Activated B cell treated with CpG ODN at 0.5 μM for 24 hours (primary cell): ENCODE measurements at regions of chr20 and their contacts with region 1.

Region 1: GRCh38 chr20:2470423-2471193 is at the start of gene SNRPB:
- DNase-seq: peak; percentile 95
- ATAC-seq: peak; percentile 94
- H3K4me3 Mint-ChIP-seq: peak within 1 kb of the TSS; percentile 99
- H3K27ac Mint-ChIP-seq: peak within 1 kb of the TSS; percentile 97
- H3K4me1 Mint-ChIP-seq: peaks cover 50% of the 10 kb centered on the region
- H3K27me3 Mint-ChIP-seq: no peaks in the 10 kb centered on the region
- CTCF ChIP-seq: no peak
- total RNA-seq, gene SNRPB: 215 and 234 TPM in 2 replicates

Region 2: DNA sequence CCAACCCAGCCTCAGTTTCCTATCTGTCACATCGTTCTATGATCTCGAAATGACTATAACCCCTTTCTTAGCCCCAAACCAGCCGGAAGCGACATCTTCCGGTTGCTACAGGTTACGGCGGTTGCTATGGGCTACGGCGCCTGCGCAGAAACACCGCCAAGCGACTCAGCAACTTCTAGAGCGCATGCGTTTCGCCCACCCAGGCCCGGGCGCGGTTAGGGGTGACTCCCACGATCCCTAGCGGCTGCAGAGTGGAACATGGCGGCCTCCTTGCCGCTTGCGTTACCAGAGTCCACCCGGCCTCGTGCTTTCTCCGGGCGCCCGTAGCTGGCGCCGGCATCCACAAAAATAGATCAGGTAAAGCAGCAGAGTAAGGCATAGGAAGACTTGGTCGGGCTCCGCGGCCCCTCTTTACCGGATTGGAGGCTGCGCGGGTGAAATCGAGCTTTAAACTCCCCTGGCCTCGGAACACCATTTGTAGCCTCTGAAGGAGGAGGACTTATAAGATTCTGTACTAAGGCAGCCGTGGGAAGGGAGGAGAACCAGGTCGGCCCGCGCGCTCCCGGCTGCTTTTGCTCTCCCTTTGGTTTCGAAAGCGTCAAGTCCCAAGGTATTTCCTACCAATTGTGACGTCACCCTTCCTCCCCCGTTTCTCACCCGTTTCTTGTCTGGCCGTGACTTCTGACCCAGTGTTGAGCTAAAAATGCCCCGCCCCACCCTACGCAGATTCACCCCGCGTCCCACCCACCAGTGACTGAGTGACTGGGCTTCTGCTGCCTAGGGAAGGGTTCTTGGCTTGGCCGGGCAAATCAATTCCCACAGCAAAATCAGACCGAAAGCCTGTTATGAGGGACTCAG is 1145.2 kb before region 1 on chr20:
- CTCF ChIA-PET with region 1: no interaction called
- POLR2A ChIA-PET with region 1: no interaction called
- intact Hi-C with region 1: loop called (anchors 10 kb)
- DNase-seq: peak; percentile 97
- ATAC-seq: peak; percentile 88
- H3K4me3 Mint-ChIP-seq: no peak overlapping the region
- H3K27ac Mint-ChIP-seq: no peak overlapping the region
- H3K4me1 Mint-ChIP-seq: peaks cover 38% of the 10 kb centered on the region
- H3K27me3 Mint-ChIP-seq: no peaks in the 10 kb centered on the region
- CTCF ChIP-seq: no peak

Region 3: GRCh38 chr20:2301164-2301622 is 169.4 kb before region 1 on chr20:
- CTCF ChIA-PET with region 1: no interaction called
- POLR2A ChIA-PET with region 1: interaction called, 7 read pairs
- intact Hi-C with region 1: loop called (anchors 2 kb)
- DNase-seq: peak; percentile 52
- ATAC-seq: peak; percentile 94
- H3K4me3 Mint-ChIP-seq: peak overlapping the region; percentile 8
- H3K27ac Mint-ChIP-seq: peak overlapping the region; percentile 87
- H3K4me1 Mint-ChIP-seq: peaks cover 33% of the 10 kb centered on the region
- H3K27me3 Mint-ChIP-seq: no peaks in the 10 kb centered on the region
- CTCF ChIP-seq: no peak

Region 4: GRCh38 chr20:2508631-2509467 is 38.2 kb after region 1 on chr20 and contains the start of gene ZNF343:
- CTCF ChIA-PET with region 1: no interaction called
- POLR2A ChIA-PET with region 1: interaction called, 32 read pairs
- intact Hi-C with region 1: loop called (anchors 1 kb)
- DNase-seq: peak; percentile 72
- ATAC-seq: peak; percentile 93
- H3K4me3 Mint-ChIP-seq: peak within 1 kb of the TSS; percentile 100
- H3K27ac Mint-ChIP-seq: peak within 1 kb of the TSS; percentile 96
- H3K4me1 Mint-ChIP-seq: peaks cover 23% of the 10 kb centered on the region
- H3K27me3 Mint-ChIP-seq: peaks cover 18% of the 10 kb centered on the region
- CTCF ChIP-seq: no peak
- total RNA-seq, gene ZNF343: 14.8 and 16.6 TPM in 2 replicates

Region 5: GRCh38 chr20:2523919-2524708 is 53.5 kb after region 1 on chr20:
- CTCF ChIA-PET with region 1: interaction called, 7 read pairs
- POLR2A ChIA-PET with region 1: interaction called, 16 read pairs
- intact Hi-C with region 1: loop called (anchors 1 kb)
- DNase-seq: peak; percentile 91
- ATAC-seq: peak; percentile 80
- H3K4me3 Mint-ChIP-seq: peak overlapping the region; percentile 90
- H3K27ac Mint-ChIP-seq: peak overlapping the region; percentile 75
- H3K4me1 Mint-ChIP-seq: peaks cover 15% of the 10 kb centered on the region
- H3K27me3 Mint-ChIP-seq: peaks cover 4% of the 10 kb centered on the region
- CTCF ChIP-seq: peak; percentile 81

Region 6: DNA sequence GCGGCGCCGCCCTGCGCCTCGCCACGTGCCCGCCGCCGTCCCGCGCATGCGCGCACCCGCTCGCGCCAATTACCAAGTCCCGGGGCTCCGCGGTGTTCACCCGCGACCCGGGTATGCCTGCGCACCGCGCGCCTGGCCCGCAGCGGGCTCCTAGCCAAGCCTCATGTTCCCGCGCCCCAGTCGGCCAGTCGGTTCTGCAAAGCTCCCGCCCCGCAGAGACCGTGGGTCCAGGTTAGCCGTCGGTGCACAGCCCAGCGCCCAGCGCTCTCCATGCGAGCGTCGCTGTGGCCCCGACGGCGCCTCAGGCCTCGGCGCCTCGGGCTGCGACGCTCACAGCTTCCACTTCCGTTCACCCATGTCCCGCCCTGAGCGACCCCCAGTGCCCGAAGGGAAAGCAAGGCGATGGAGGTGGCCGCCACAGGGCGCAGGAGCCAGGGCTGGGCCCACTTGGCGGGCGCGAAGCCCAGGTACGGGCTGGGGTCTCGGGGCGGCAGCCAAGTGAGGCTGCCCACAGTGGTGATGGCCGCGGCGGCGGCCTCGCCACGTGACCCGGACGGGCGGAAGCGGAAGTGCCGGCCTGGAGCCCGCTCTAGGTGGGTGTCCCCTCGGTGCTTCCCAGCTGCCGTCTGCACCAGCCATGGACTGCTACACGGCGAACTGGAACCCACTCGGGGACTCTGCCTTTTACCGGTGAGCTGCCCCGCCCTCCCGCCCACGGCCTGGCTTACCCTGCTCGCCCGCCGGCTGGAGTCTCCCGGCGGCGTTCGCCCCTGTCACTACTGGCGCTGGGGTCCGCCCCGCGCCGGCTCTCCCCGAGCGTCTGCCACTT is 369.7 kb after region 1 on chr20 and contains the starts of genes PCED1A and VPS16:
- CTCF ChIA-PET with region 1: no interaction called
- POLR2A ChIA-PET with region 1: interaction called, 7 read pairs
- intact Hi-C with region 1: loop called (anchors 10 kb)
- DNase-seq: peak; percentile 96
- ATAC-seq: peak; percentile 92
- H3K4me3 Mint-ChIP-seq: peak within 1 kb of the TSS; percentile 86
- H3K27ac Mint-ChIP-seq: peak within 1 kb of the TSS; percentile 82
- H3K4me1 Mint-ChIP-seq: peaks cover 28% of the 10 kb centered on the region
- H3K27me3 Mint-ChIP-seq: no peaks in the 10 kb centered on the region
- CTCF ChIP-seq: no peak
- total RNA-seq, gene PCED1A: 53.2 and 59.1 TPM in 2 replicates
- total RNA-seq, gene VPS16: 54.7 and 56.9 TPM in 2 replicates